Right ventricle myocardium inferior (tissue), 1 donor: ENCODE measurements at regions of chr18 and their contacts with region 1.

Region 1: DNA sequence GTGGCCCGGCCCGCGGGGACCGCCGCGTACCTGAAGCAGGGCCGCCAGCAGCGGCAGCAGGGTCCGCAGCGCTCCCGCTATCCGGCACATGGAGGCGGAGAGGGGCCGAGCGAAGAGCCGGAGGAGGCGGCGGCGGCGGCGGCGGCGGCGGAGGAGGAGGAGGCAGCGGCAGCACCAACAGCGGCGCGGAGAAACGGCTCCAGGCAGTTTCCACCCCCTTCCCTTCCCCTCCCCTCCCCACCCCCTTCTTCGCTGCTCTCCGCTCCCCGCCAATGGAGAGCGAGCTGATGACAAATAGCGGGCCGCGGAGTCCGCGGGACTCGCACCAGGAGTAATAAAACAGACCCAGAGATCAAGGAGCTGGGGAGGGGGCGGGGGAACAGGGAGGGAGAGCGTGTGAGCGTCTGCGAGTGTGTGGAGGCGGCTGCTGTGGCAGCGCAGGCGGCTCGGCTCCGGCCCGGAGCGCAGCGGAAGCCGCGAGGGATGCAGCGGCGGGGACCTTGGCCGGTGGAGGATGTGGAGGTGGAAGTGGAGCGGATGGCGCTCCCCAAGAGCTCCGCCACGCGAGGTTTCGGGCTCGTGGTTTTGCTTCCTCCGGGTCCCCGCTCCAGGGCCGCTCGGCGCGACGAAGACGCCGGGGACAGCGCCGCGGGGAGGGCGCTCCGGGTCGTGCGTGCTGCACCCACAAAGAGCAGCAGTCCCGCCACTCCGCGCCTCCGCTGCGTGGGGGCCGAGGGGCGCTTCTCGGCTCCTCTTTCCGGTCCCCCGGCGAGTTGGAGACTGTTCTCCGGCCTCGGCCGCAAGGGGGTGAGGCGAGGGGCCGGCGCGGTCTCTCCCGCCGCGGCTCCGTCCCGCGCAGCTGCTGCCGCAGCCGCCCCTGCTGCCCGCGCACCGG is at the start of gene CDH2:
- DNase-seq: peak; percentile 79
- ATAC-seq: peak; percentile 69
- total RNA-seq, gene CDH2: 293 TPM

Region 2: DNA sequence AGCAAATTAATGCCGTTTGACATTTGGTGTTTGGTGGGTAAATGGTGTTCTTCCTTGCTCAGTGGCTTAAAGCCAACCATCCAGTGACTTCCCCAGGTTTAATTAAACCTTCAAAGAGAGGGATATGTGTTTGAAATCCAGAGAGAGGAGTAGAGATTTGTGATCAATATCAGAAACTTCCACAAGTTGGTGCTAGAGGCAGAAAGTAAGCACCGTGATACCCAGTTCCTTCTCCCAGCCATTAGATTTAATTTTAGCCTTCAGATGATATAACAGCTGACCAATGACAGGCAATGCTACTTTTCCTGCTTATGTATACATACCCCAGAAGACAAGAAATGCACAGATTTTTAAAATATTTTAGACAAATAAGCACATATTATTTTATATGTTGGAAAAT is 398.7 kb before region 1 on chr18:
- intact Hi-C with region 1: loop called (anchors 5 kb)
- DNase-seq: no peak
- ATAC-seq: peak; percentile 56

Region 3: DNA sequence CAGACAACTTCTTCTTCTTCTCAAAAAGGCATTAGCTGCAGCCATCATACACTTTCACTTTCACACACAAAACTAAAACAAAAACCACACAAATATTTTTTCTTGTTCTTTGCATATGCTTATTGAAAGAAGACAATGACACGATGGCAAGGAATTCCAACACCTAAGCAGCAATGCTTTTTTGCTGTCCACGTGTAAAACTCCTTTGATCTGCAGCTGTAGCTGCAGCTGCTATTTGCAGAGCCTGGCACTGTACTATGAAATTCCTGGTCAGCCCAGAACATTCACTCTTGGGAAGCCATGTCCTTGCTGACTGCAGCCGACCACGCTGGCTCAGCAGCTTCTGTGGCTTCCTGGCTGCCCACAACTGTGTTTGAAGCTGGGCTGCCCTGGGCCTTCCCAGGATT is 316.5 kb before region 1 on chr18:
- intact Hi-C with region 1: loop called (anchors 10 kb)
- DNase-seq: peak; percentile 60
- ATAC-seq: peak; percentile 74

Region 4: GRCh38 chr18:28013066-28013465 is 164.1 kb before region 1 on chr18:
- intact Hi-C with region 1: loop called (anchors 5 kb)
- DNase-seq: no peak
- ATAC-seq: no peak

Region 5: DNA sequence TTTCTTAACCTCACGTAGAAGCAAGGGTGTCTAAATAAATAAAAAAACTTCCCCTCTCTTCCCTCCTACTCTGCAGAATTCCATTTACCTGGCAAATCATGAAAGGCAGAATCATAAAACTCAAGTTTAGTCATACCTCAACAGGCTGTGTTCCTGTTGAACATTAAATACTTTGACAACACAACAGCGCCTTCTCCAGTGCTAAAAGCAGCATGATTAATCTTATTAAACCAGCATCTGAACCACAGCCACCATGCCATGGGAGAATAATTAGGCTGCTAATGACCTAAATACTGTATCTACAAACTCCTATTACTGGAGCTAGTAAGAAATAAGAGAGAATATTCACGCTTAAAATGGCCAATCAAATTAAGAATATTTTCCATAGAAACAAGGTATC is 68.4 kb before region 1 on chr18:
- intact Hi-C with region 1: loop called (anchors 1 kb)
- DNase-seq: no peak
- ATAC-seq: no peak

Region 6: GRCh38 chr18:28212060-28212459 is 34.9 kb after region 1 on chr18:
- intact Hi-C with region 1: no loop called
- DNase-seq: no peak
- ATAC-seq: no peak